ENCODE measurements at regions of chr19 and their contacts with region 1.

Region 1: GRCh38 chr19:58154679-58155648 is 4.4 kb upstream of the ZNF329 start:
- DNase-seq: peak; percentile 92 to 100 (median 98)
- ATAC-seq: peak; percentile 98
- H3K4me3 ChIP-seq: peak overlapping the region; percentile 97
- H3K4me3 Mint-ChIP-seq: peak overlapping the region; percentile 72 to 90 (median 84)
- H3K27ac ChIP-seq: peak overlapping the region; percentile 99
- H3K27ac Mint-ChIP-seq: peak overlapping the region; percentile 52 to 80 (median 73)
- H3K4me1 ChIP-seq: peaks cover 8 to 13% of the 10 kb centered on the region in 2 donors
- H3K4me1 Mint-ChIP-seq: peaks cover 6 to 33% (median 19%) of the 10 kb centered on the region in 7 donors
- H3K27me3 ChIP-seq: no peaks in the 10 kb centered on the region
- H3K27me3 Mint-ChIP-seq: no peaks in the 10 kb centered on the region

Region 2: GRCh38 chr19:56393119-56394012 is 1761.6 kb before region 1 on chr19 and contains the start of gene ZNF582:
- CTCF ChIA-PET with region 1: no interaction called
- POLR2A ChIA-PET with region 1: no interaction called
- intact Hi-C with region 1: loop called in 1 of 2 experiments (anchors 1 kb)
- DNase-seq: peak; percentile 79 to 94 (median 90)
- ATAC-seq: peak; percentile 98
- H3K4me3 ChIP-seq: peak within 1 kb of the TSS; percentile 90
- H3K4me3 Mint-ChIP-seq: peak within 1 kb of the TSS; percentile 89 to 99 (median 98)
- H3K27ac ChIP-seq: peak within 1 kb of the TSS; percentile 92
- H3K27ac Mint-ChIP-seq: peak within 1 kb of the TSS; percentile 91 to 99 (median 96)
- H3K4me1 ChIP-seq: peaks cover 3 to 5% of the 10 kb centered on the region in 2 donors
- H3K4me1 Mint-ChIP-seq: peaks cover 3 to 32% (median 10%) of the 10 kb centered on the region in 7 donors
- H3K27me3 ChIP-seq: no peaks in the 10 kb centered on the region
- H3K27me3 Mint-ChIP-seq: no peaks in the 10 kb centered on the region
- total RNA-seq, gene ZNF582: 1.7 to 7.6 (median 3.3) TPM

Region 3: DNA sequence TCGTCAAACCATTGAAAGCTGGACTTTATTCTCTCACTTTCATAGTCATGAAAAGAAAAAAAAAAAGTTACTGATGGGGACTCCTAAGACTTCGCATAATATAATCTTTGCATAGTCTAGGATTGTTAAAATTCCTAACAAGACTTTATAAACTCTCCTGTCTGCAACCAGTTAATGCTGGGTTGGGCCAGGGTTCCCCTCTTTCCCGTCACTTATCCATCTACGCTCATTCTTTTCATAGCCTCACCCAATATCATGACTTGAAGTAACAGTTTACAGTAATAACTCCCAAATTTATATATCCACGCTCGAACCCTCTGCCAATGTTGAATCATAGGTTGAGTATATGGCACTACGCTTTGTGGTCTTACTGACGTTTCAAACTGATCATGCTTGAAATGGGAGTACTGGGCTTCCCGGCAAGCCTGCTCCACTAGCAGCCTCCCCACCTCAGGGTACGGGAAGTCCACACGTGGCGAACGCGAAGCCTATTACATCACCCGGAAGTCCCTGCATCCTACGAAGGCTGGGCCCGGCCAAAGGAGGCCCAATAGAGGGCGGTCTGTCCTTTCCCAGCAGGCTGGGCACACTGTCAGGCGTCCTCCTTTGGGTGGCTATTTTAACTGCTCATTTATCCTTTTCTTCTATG is 875.4 kb before region 1 on chr19:
- CTCF ChIA-PET with region 1: no interaction called
- POLR2A ChIA-PET with region 1: no interaction called
- intact Hi-C with region 1: loop called in 1 of 2 experiments (anchors 1 kb)
- DNase-seq: peak in 6 of 9 donors; percentile 60 to 81 (median 78)
- ATAC-seq: peak; percentile 85
- H3K4me3 ChIP-seq: peak overlapping the region; percentile 80
- H3K4me3 Mint-ChIP-seq: no peak overlapping the region
- H3K27ac ChIP-seq: peak overlapping the region; percentile 98
- H3K27ac Mint-ChIP-seq: peak overlapping the region in 2 of 9 donors; percentile 6 to 51
- H3K4me1 ChIP-seq: peaks cover 18 to 23% of the 10 kb centered on the region in 2 donors
- H3K4me1 Mint-ChIP-seq: peaks cover 7 to 33% (median 25%) of the 10 kb centered on the region in 7 donors
- H3K27me3 ChIP-seq: no peaks in the 10 kb centered on the region
- H3K27me3 Mint-ChIP-seq: no peaks in the 10 kb centered on the region

Region 4: GRCh38 chr19:57382806-57383488 is 772.0 kb before region 1 on chr19:
- CTCF ChIA-PET with region 1: no interaction called
- POLR2A ChIA-PET with region 1: no interaction called
- intact Hi-C with region 1: no loop called
- DNase-seq: no peak
- ATAC-seq: no peak
- H3K4me3 ChIP-seq: no peak overlapping the region
- H3K4me3 Mint-ChIP-seq: no peak overlapping the region
- H3K27ac ChIP-seq: no peak overlapping the region
- H3K27ac Mint-ChIP-seq: no peak overlapping the region
- H3K4me1 ChIP-seq: no peaks in the 10 kb centered on the region
- H3K4me1 Mint-ChIP-seq: no peaks in the 10 kb centered on the region
- H3K27me3 ChIP-seq: no peaks in the 10 kb centered on the region
- H3K27me3 Mint-ChIP-seq: peaks cover 0 to 3% (median 0%) of the 10 kb centered on the region in 5 donors

Region 5: GRCh38 chr19:57613941-57614743 is 540.8 kb before region 1 on chr19 and contains the start of gene ZNF134:
- CTCF ChIA-PET with region 1: no interaction called
- POLR2A ChIA-PET with region 1: no interaction called
- intact Hi-C with region 1: loop called in 1 of 2 experiments (anchors 1 kb)
- DNase-seq: peak; percentile 74 to 90 (median 84)
- ATAC-seq: peak; percentile 100
- H3K4me3 ChIP-seq: peak within 1 kb of the TSS; percentile 94
- H3K4me3 Mint-ChIP-seq: peak within 1 kb of the TSS; percentile 79 to 95 (median 90)
- H3K27ac ChIP-seq: peak within 1 kb of the TSS; percentile 76
- H3K27ac Mint-ChIP-seq: peak within 1 kb of the TSS; percentile 78 to 92 (median 86)
- H3K4me1 ChIP-seq: peaks cover 14 to 15% of the 10 kb centered on the region in 2 donors
- H3K4me1 Mint-ChIP-seq: peaks cover 18 to 43% (median 34%) of the 10 kb centered on the region in 7 donors
- H3K27me3 ChIP-seq: no peaks in the 10 kb centered on the region
- H3K27me3 Mint-ChIP-seq: no peaks in the 10 kb centered on the region
- total RNA-seq, gene ZNF134: 14.6 to 33.9 (median 25.7) TPM

Region 6: DNA sequence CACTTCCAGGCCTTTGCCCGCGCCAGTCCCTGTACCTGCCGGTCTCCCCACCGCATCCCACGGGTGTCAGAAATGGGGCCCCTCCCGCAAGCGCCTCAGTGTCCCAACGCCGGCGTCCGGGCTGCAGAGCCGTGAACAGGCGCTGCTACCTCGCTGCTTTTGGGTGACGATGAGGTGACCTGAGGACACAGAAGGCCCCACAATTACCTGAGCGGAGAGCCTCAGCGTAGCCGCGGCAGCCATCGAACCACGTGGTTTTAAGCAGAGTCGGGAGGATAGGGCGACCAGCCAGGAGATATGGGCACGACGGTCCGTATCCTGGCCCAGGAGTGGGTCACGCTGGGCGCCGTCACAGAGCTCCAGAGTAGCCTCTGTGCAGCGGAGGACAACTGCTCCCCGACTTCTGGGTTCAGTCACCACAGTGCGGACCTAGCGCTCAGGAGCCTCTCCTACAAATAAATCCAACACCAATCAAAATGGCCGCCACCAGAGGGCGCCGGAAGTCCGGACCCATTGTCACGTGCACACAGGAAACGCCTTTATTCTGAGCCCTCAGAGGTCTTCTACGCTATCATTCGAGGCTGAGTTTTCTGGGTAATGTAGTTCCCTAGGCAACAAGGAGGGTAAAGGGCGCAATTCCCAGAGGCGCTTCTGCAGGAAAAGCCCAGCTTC is 266.3 kb before region 1 on chr19 and contains the start of gene ZNF814:
- CTCF ChIA-PET with region 1: no interaction called
- POLR2A ChIA-PET with region 1: no interaction called
- intact Hi-C with region 1: loop called in 1 of 2 experiments (anchors 5 kb)
- DNase-seq: peak; percentile 61 to 86 (median 81)
- ATAC-seq: peak; percentile 98
- H3K4me3 ChIP-seq: peak within 1 kb of the TSS; percentile 80
- H3K4me3 Mint-ChIP-seq: peak within 1 kb of the TSS; percentile 84 to 95 (median 90)
- H3K27ac ChIP-seq: peak within 1 kb of the TSS; percentile 74
- H3K27ac Mint-ChIP-seq: peak within 1 kb of the TSS; percentile 66 to 92 (median 86)
- H3K4me1 ChIP-seq: no peaks in the 10 kb centered on the region
- H3K4me1 Mint-ChIP-seq: peaks cover 18 to 33% (median 22%) of the 10 kb centered on the region in 7 donors
- H3K27me3 ChIP-seq: no peaks in the 10 kb centered on the region
- H3K27me3 Mint-ChIP-seq: no peaks in the 10 kb centered on the region
- total RNA-seq, gene ZNF814: 12.7 to 56.9 (median 32.7) TPM

Region 7: GRCh38 chr19:57964748-57965147 is 190.2 kb before region 1 on chr19:
- CTCF ChIA-PET with region 1: no interaction called
- POLR2A ChIA-PET with region 1: no interaction called
- intact Hi-C with region 1: no loop called
- DNase-seq: no peak
- ATAC-seq: no peak
- H3K4me3 ChIP-seq: no peak overlapping the region
- H3K4me3 Mint-ChIP-seq: no peak overlapping the region
- H3K27ac ChIP-seq: no peak overlapping the region
- H3K27ac Mint-ChIP-seq: no peak overlapping the region
- H3K4me1 ChIP-seq: no peaks in the 10 kb centered on the region
- H3K4me1 Mint-ChIP-seq: no peaks in the 10 kb centered on the region
- H3K27me3 ChIP-seq: no peaks in the 10 kb centered on the region
- H3K27me3 Mint-ChIP-seq: no peaks in the 10 kb centered on the region

Region 8: GRCh38 chr19:58097781-58098681 is 56.9 kb before region 1 on chr19 and contains the start of gene ZSCAN18:
- CTCF ChIA-PET with region 1: no interaction called
- POLR2A ChIA-PET with region 1: no interaction called
- intact Hi-C with region 1: loop called (anchors 1 to 2 kb)
- DNase-seq: peak; percentile 77 to 100 (median 99)
- ATAC-seq: peak; percentile 97
- H3K4me3 ChIP-seq: peak within 1 kb of the TSS; percentile 86
- H3K4me3 Mint-ChIP-seq: peak within 1 kb of the TSS; percentile 83 to 100 (median 91)
- H3K27ac ChIP-seq: peak within 1 kb of the TSS; percentile 100
- H3K27ac Mint-ChIP-seq: peak within 1 kb of the TSS; percentile 98 to 100 (median 100)
- H3K4me1 ChIP-seq: peaks cover 0 to 11% of the 10 kb centered on the region in 2 donors
- H3K4me1 Mint-ChIP-seq: peaks cover 8 to 18% (median 15%) of the 10 kb centered on the region in 7 donors
- H3K27me3 ChIP-seq: no peaks in the 10 kb centered on the region
- H3K27me3 Mint-ChIP-seq: no peaks in the 10 kb centered on the region
- total RNA-seq, gene ZSCAN18: 8.2 to 100 (median 78.1) TPM

Region 9: GRCh38 chr19:58218899-58219298 is 63.9 kb after region 1 on chr19:
- CTCF ChIA-PET with region 1: no interaction called
- POLR2A ChIA-PET with region 1: no interaction called
- intact Hi-C with region 1: no loop called
- DNase-seq: peak in 3 of 9 donors; percentile 16 to 24 (median 24)
- ATAC-seq: peak; percentile 42
- H3K4me3 ChIP-seq: no peak overlapping the region
- H3K4me3 Mint-ChIP-seq: no peak overlapping the region
- H3K27ac ChIP-seq: no peak overlapping the region
- H3K27ac Mint-ChIP-seq: no peak overlapping the region
- H3K4me1 ChIP-seq: no peaks in the 10 kb centered on the region
- H3K4me1 Mint-ChIP-seq: no peaks in the 10 kb centered on the region
- H3K27me3 ChIP-seq: no peaks in the 10 kb centered on the region
- H3K27me3 Mint-ChIP-seq: peaks cover 0 to 5% (median 0%) of the 10 kb centered on the region in 5 donors